ENCODE measurements at regions of chr4 and their contacts with region 1.

Region 1: GRCh38 chr4:3480528-3481112 is 17.5 kb downstream of the DOK7 start:
- DNase-seq: peak; percentile 45
- ATAC-seq: peak; percentile 87
- H3K4me3 ChIP-seq: no peak overlapping the region
- H3K27ac ChIP-seq: peak overlapping the region; percentile 8; the same call in 1 of the 2 replicates
- H3K4me1 ChIP-seq: peaks cover 20 to 28% of the 10 kb centered on the region in 2 experiments
- H3K27me3 ChIP-seq: no peaks in the 10 kb centered on the region
- CTCF ChIP-seq: peak; percentile 97 to 100 (median 98)
- POLR2A ChIP-seq: no peak
- RAD21 ChIP-seq: peak; percentile 87

Region 2: GRCh38 chr4:3106339-3107186 is 374.1 kb before region 1 on chr4:
- CTCF ChIA-PET with region 1: interaction called, 4 read pairs
- POLR2A ChIA-PET with region 1: no interaction called
- RAD21 ChIA-PET with region 1: no interaction called
- intact Hi-C with region 1: loop called (anchors 1 kb)
- DNase-seq: peak; percentile 55
- ATAC-seq: peak; percentile 100
- H3K4me3 ChIP-seq: no peak overlapping the region
- H3K27ac ChIP-seq: no peak overlapping the region
- H3K4me1 ChIP-seq: peaks cover 0 to 9% of the 10 kb centered on the region in 2 experiments; a peak in 1 of 4 replicates
- H3K27me3 ChIP-seq: no peaks in the 10 kb centered on the region
- CTCF ChIP-seq: peak; percentile 76 to 96 (median 95)
- POLR2A ChIP-seq: no peak
- RAD21 ChIP-seq: peak; percentile 90

Region 3: DNA sequence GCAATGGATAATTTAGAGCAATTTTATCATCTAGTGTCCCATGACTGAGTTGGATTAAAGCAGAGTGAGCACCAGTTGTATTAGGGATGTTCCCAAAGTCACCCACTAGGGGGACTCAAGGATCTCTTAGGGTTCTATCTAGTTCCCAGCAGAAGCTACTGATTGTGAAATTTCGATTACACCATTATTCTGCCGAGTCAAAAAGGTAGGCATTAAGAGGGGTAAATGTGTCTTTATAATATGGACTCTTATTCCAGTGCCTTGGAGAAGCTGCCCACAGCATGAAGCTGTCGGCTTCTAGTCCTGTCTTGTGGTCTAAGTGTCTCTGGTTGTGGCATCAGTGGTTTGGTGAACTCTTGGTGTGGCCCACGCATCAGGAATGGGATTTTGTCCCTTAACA is 134.5 kb before region 1 on chr4:
- CTCF ChIA-PET with region 1: interaction called, 19 read pairs
- POLR2A ChIA-PET with region 1: no interaction called
- RAD21 ChIA-PET with region 1: interaction called in 1 of 2 experiments, 3 read pairs
- intact Hi-C with region 1: no loop called
- DNase-seq: peak; percentile 47
- ATAC-seq: peak; percentile 96
- H3K4me3 ChIP-seq: no peak overlapping the region
- H3K27ac ChIP-seq: no peak overlapping the region
- H3K4me1 ChIP-seq: no peaks in the 10 kb centered on the region
- H3K27me3 ChIP-seq: no peaks in the 10 kb centered on the region
- CTCF ChIP-seq: peak; percentile 76 to 90 (median 80)
- POLR2A ChIP-seq: no peak
- RAD21 ChIP-seq: peak; percentile 82

Region 4: GRCh38 chr4:3418029-3418762 is 62.4 kb before region 1 on chr4:
- CTCF ChIA-PET with region 1: interaction called, 3 read pairs
- POLR2A ChIA-PET with region 1: no interaction called
- RAD21 ChIA-PET with region 1: no interaction called
- intact Hi-C with region 1: loop called (anchors 1 kb)
- DNase-seq: no peak
- ATAC-seq: peak; percentile 94
- H3K4me3 ChIP-seq: no peak overlapping the region
- H3K27ac ChIP-seq: no peak overlapping the region
- H3K4me1 ChIP-seq: no peaks in the 10 kb centered on the region
- H3K27me3 ChIP-seq: no peaks in the 10 kb centered on the region
- CTCF ChIP-seq: peak; percentile 37 to 70 (median 57); a peak in 5 of 6 replicates
- POLR2A ChIP-seq: no peak
- RAD21 ChIP-seq: peak; percentile 52; the same call in 1 of the 2 replicates

Region 5: GRCh38 chr4:3452376-3452775 is 28.2 kb before region 1 on chr4:
- CTCF ChIA-PET with region 1: interaction called, 10 read pairs
- POLR2A ChIA-PET with region 1: interaction called, 3 read pairs
- RAD21 ChIA-PET with region 1: no interaction called
- intact Hi-C with region 1: no loop called
- DNase-seq: peak; percentile 41
- ATAC-seq: peak; percentile 90
- H3K4me3 ChIP-seq: no peak overlapping the region
- H3K27ac ChIP-seq: no peak overlapping the region
- H3K4me1 ChIP-seq: peaks cover 0 to 7% of the 10 kb centered on the region in 2 experiments; a peak in 2 of 4 replicates
- H3K27me3 ChIP-seq: no peaks in the 10 kb centered on the region
- CTCF ChIP-seq: peak; percentile 75 to 92 (median 79)
- POLR2A ChIP-seq: no peak
- RAD21 ChIP-seq: peak; percentile 43

Measured in HCT116 (cell line).